Heart right ventricle (tissue), 16 donors: ENCODE measurements at regions of chr6 and their contacts with region 1.

Region 1: GRCh38 chr6:168858926-168859325 is 394.7 kb downstream of the THBS2 start:
- DNase-seq: no peak
- ATAC-seq: no peak
- H3K4me3 ChIP-seq: no peak overlapping the region
- H3K27ac ChIP-seq: no peak overlapping the region
- H3K4me1 ChIP-seq: no peaks in the 10 kb centered on the region
- H3K27me3 ChIP-seq: peaks cover 0 to 3% (median 0%) of the 10 kb centered on the region in 7 donors
- CTCF ChIP-seq: no peak

Region 2: DNA sequence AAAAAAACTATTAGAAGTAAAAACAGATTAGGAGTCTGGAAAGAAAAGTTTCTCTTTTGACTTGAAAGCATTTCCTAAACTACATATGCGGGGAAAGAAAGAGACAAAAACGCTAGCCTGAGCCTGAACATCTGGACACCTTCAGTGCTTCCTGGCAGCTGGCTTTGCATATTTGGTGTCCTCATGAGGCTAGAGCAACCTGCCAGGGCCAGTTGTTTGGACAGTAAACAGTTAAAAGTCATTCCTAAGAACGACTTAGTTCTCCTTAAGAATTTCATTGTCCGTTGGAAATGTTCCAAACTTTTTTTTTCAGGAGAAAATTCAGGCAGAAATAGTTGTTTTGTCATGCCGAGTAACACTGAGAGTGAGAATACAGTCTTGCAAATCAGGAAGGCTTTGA is 218.2 kb before region 1 on chr6:
- intact Hi-C with region 1: no loop called
- DNase-seq: no peak
- ATAC-seq: peak in 1 of 8 donors; percentile 16
- H3K4me3 ChIP-seq: no peak overlapping the region
- H3K27ac ChIP-seq: no peak overlapping the region
- H3K4me1 ChIP-seq: peaks cover 0 to 34% (median 12%) of the 10 kb centered on the region in 9 donors
- H3K27me3 ChIP-seq: no peaks in the 10 kb centered on the region
- CTCF ChIP-seq: no peak

Region 3: DNA sequence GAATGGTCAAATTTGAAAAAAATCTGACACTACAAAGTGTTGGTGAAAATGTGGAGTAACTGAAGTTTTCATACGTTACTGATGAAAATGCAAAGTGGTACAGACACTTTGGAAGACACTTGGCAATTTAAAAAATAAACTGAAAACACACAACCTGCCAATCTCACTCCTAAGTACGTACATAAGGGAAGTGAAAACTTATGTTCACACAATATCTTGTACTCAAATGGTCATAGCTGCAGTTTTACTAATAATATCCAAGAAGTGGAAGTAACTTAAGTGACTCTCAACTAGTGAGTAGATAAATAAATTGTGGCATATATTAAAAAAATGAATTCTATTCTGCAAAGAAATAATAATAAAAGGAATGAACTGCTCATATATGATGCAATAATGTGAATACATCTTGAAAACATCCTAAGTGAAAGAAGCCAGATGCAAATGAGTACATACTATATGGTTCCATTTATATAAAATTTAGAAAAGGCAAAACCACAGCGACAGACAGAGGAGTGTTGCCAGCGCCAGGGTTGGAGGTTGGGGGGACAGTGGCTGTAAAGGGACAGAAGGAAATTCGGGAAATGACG is 1090.7 kb after region 1 on chr6:
- intact Hi-C with region 1: loop called in 1 of 10 experiments (anchors 5 kb)
- DNase-seq: no peak
- ATAC-seq: no peak
- H3K4me3 ChIP-seq: no peak overlapping the region
- H3K27ac ChIP-seq: no peak overlapping the region
- H3K4me1 ChIP-seq: no peaks in the 10 kb centered on the region
- H3K27me3 ChIP-seq: no peaks in the 10 kb centered on the region
- CTCF ChIP-seq: no peak